H1 (cell line): ENCODE measurements at regions of chr15 and their contacts with region 1.

Region 1: DNA sequence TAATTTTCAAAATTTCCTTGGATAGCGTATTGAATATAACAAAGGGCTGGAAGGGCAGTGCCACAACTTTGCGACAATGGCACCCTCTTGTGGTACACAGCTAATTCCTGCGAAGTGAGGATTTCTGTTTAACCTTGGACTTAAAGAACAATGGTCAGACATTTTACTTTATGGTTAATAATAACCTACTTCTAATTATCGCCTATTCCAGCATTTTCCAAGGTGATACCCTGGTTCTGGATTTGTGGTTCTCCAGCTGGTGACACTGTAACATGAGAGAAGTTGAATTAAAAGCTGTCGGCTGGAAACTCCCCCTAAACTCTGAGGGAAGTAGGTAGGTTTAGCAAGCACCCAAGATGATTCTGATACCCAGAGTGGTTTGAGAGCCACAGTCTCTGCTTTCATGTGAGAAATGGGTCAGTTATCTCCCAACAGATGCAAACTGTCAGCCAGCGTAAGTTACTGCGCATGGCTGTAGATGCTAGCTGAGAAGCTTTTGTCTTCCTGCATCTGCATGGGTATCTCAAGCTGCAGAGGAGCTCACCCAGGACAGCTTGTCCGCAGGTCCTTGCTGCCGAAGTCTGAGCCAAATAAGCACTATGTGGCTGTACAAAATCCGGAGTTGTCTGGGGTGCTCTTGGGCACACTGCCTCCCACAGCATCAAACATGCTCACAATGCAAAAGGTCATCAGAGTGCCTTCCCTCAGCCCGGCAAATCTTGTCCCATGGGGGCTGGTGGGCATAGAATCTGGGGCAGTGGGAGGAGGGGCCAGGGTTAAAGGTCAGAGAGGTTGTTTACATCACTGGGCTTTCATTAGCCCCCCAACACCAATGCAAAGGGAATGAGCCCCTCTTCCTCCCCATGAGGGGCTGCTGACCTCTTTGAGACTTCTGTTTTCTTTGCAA is 6.6 kb upstream of the CHSY1 start:
- DNase-seq: peak in 1 of 2 experiments; percentile 47
- H3K4me3 ChIP-seq: no peak overlapping the region
- H3K27ac ChIP-seq: no peak overlapping the region
- H3K4me1 ChIP-seq: peaks cover 2 to 13% (median 9%) of the 10 kb centered on the region in 4 experiments; a peak in 5 of 7 replicates
- H3K27me3 ChIP-seq: no peaks in the 10 kb centered on the region
- CTCF ChIP-seq: peak; percentile 55 to 81 (median 79)
- EP300 ChIP-seq: no peak
- POLR2A ChIP-seq: no peak
- RAD21 ChIP-seq: peak; percentile 93 to 94

Region 2: DNA sequence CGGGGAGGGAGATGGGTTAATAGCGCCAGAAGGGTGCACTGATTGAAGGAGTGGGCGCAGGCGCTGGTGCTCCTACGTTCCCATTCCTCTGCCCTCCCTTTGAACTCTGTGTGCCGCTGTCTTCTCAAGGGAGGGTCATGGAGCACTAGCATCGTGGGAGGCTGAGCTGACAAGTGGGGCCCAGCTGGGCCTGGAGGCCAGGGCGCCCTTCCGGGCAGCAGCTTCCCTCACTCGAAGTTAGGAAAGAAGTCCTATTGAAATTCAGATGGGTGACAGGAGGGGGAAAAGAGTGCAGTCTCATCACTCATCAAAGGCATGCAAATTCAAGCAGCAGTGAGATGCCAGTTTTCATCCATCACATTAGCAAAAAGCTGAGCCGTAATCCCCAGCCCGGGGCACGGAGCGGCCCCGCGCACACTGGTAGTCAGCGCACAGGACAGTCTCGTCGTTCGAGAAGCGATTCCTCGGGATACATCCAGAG is 211.2 kb before region 1 on chr15:
- CTCF ChIA-PET with region 1: interaction called, 16 read pairs
- POLR2A ChIA-PET with region 1: no interaction called
- DNase-seq: peak in 1 of 2 experiments; percentile 53
- H3K4me3 ChIP-seq: no peak overlapping the region; a peak in 1 of 8 replicates
- H3K27ac ChIP-seq: no peak overlapping the region
- H3K4me1 ChIP-seq: peaks cover 0 to 9% (median 5%) of the 10 kb centered on the region in 4 experiments; a peak in 6 of 7 replicates
- H3K27me3 ChIP-seq: 0 out of 7 replicates have a peak, but pooled peaks cover 0 to 2% (median 0%) of the 10 kb centered on the region in 4 experiments
- CTCF ChIP-seq: no peak
- EP300 ChIP-seq: no peak
- POLR2A ChIP-seq: no peak
- RAD21 ChIP-seq: no peak

Region 3: GRCh38 chr15:101121511-101122090 is 136.9 kb before region 1 on chr15:
- CTCF ChIA-PET with region 1: interaction called, 11 read pairs
- POLR2A ChIA-PET with region 1: interaction called, 4 read pairs
- DNase-seq: peak in 1 of 2 experiments; percentile 78
- H3K4me3 ChIP-seq: no peak overlapping the region
- H3K27ac ChIP-seq: no peak overlapping the region
- H3K4me1 ChIP-seq: peaks cover 0 to 12% (median 8%) of the 10 kb centered on the region in 4 experiments; a peak in 5 of 7 replicates
- H3K27me3 ChIP-seq: no peaks in the 10 kb centered on the region
- CTCF ChIP-seq: peak; percentile 18 to 34 (median 32); a peak in 3 of 4 replicates
- EP300 ChIP-seq: no peak
- POLR2A ChIP-seq: no peak
- RAD21 ChIP-seq: peak; percentile 38 to 49

Region 4: DNA sequence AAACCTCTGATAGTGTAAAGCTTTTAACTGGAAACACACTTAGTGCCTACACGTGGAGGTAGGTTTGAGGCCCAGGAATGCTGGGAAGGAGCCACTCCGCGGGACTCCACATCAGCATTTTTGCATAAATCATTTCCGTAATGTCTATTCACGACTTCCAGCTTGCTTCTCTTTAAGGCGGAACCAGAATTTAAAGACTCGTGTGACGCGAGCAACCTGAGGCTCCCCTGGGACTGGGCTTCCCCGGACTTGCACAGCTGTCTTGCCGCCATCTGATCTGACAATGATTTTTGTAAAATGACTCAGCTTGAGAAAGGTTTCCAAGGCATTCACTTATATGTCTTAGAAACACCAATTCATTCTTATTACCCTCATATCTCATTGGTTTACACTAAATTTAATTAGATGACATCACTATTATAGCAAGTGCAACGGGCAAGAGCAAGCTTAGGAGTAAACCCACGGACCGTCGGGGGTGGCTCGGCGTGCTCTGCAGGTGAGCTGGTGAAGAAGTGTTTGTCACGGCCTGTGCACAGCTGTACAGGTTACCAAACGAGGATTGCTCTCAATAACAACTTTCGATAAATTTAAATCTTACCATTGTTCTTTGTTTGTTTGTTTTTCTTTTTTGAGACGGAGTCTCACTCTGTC is 101.9 kb before region 1 on chr15:
- CTCF ChIA-PET with region 1: interaction called, 15 read pairs
- POLR2A ChIA-PET with region 1: no interaction called
- DNase-seq: no peak
- H3K4me3 ChIP-seq: no peak overlapping the region
- H3K27ac ChIP-seq: no peak overlapping the region
- H3K4me1 ChIP-seq: peaks cover 0 to 6% (median 0%) of the 10 kb centered on the region in 4 experiments; a peak in 3 of 7 replicates
- H3K27me3 ChIP-seq: peaks cover 0 to 2% (median 0%) of the 10 kb centered on the region in 4 experiments; a peak in 1 of 7 replicates
- CTCF ChIP-seq: no peak
- EP300 ChIP-seq: no peak
- POLR2A ChIP-seq: no peak
- RAD21 ChIP-seq: no peak

Region 5: GRCh38 chr15:101269479-101270223 is 11.2 kb after region 1 on chr15:
- CTCF ChIA-PET with region 1: interaction called, 62 read pairs
- POLR2A ChIA-PET with region 1: interaction called, 9 read pairs
- DNase-seq: no peak
- H3K4me3 ChIP-seq: no peak overlapping the region
- H3K27ac ChIP-seq: no peak overlapping the region
- H3K4me1 ChIP-seq: peaks cover 0 to 2% (median 0%) of the 10 kb centered on the region in 4 experiments; a peak in 1 of 7 replicates
- H3K27me3 ChIP-seq: no peaks in the 10 kb centered on the region
- CTCF ChIP-seq: peak; percentile 70 to 82 (median 77)
- EP300 ChIP-seq: no peak
- POLR2A ChIP-seq: peak in 1 of 2 experiments; percentile 41; a peak in 1 of 3 replicates
- RAD21 ChIP-seq: peak; percentile 51 to 68

Region 6: GRCh38 chr15:101455291-101456025 is 197.0 kb after region 1 on chr15:
- CTCF ChIA-PET with region 1: no interaction called
- POLR2A ChIA-PET with region 1: no interaction called
- DNase-seq: no peak
- H3K4me3 ChIP-seq: no peak overlapping the region
- H3K27ac ChIP-seq: no peak overlapping the region
- H3K4me1 ChIP-seq: peaks cover 0 to 10% (median 1%) of the 10 kb centered on the region in 4 experiments; a peak in 3 of 7 replicates
- H3K27me3 ChIP-seq: no peaks in the 10 kb centered on the region
- CTCF ChIP-seq: no peak
- EP300 ChIP-seq: no peak
- POLR2A ChIP-seq: no peak
- RAD21 ChIP-seq: no peak